ENCODE measurements at regions of chr5 and their contacts with region 1.

Region 1: DNA sequence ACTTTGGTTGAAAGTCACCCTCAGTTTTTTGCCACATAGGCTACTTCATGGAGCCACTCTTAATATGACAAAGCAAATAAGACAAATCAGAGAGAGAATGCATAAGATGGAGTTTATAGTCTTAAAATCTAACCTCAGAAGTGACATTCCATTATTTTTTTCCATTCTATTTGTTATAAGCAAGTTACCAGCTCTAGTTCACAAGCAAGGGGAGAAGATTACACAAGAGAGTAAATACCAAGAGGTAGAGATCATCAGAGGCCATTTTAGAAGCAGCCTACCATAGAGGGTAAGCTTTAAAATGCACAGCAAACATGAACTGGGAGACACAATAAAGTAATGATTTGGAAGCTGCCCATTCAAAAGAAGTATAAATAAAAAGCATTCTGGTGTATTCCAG is 651.3 kb upstream of the MEF2C start:
- DNase-seq: no peak
- ATAC-seq: no peak
- H3K4me3 ChIP-seq: no peak overlapping the region
- H3K27ac ChIP-seq: no peak overlapping the region
- H3K4me1 ChIP-seq: peaks cover 6% of the 10 kb centered on the region
- H3K27me3 ChIP-seq: no peaks in the 10 kb centered on the region
- CTCF ChIP-seq: no peak

Region 2: GRCh38 chr5:89520771-89521170 is 13.6 kb before region 1 on chr5:
- intact Hi-C with region 1: loop called in 1 of 2 experiments (anchors 1 kb)
- DNase-seq: no peak
- ATAC-seq: no peak
- H3K4me3 ChIP-seq: no peak overlapping the region
- H3K27ac ChIP-seq: no peak overlapping the region
- H3K4me1 ChIP-seq: no peaks in the 10 kb centered on the region
- H3K27me3 ChIP-seq: no peaks in the 10 kb centered on the region
- CTCF ChIP-seq: no peak